ENCODE measurements at regions of chr5 and their contacts with region 1.

Region 1: GRCh38 chr5:135810188-135810943 is 24.1 kb upstream of the SLC25A48 start:
- ATAC-seq: no peak
- H3K4me3 ChIP-seq: no peak overlapping the region
- H3K27ac ChIP-seq: no peak overlapping the region
- H3K4me1 ChIP-seq: no peaks in the 10 kb centered on the region

Region 2: DNA sequence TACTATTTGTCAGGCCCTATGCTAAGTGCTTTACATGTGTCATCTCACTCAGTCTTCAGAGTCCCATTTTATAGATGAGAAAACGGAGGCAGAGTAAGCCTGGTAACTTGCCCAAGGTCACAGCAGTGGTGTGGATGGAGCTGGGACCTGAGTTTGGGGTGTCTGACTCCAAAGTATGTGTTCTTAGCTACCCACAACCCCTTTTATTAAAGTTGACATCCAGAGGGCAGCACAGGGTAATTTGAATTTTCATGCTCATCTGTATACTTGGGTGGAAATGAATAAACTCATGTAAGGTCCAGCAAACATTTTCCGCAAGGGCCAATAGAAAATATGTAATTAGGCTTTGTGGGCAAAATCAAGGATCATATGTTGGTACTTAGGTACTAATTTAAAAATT is 69.3 kb before region 1 on chr5:
- in situ Hi-C with region 1: loop called in 1 of 9 experiments (anchors 10 kb)
- ATAC-seq: no peak
- H3K4me3 ChIP-seq: no peak overlapping the region
- H3K27ac ChIP-seq: no peak overlapping the region
- H3K4me1 ChIP-seq: no peaks in the 10 kb centered on the region

Measured in motor neuron (in vitro differentiated cells).